ENCODE measurements at regions of chr9 and their contacts with region 1.

Region 1: GRCh38 chr9:111896353-111896958 is at the start of gene UGCG:
- DNase-seq: peak; percentile 85 to 92 (median 87)
- H3K4me3 ChIP-seq: peak within 1 kb of the TSS; percentile 86
- H3K27ac ChIP-seq: peak within 1 kb of the TSS; percentile 82 to 83
- H3K4me1 ChIP-seq: peaks cover 7% of the 10 kb centered on the region
- H3K27me3 ChIP-seq: no peaks in the 10 kb centered on the region
- CTCF ChIP-seq: peak in 1 of 3 donors; percentile 21
- EP300 ChIP-seq: no peak
- POLR2A ChIP-seq: peak; percentile 92
- total RNA-seq, gene UGCG: 18.6 to 74.1 (median 22.5) TPM

Region 2: GRCh38 chr9:110081395-110081794 is 1815.1 kb before region 1 on chr9:
- intact Hi-C with region 1: loop called in 1 of 4 experiments (anchors 5 kb)
- DNase-seq: no peak
- H3K4me3 ChIP-seq: no peak overlapping the region
- H3K27ac ChIP-seq: no peak overlapping the region
- H3K4me1 ChIP-seq: peaks cover 8% of the 10 kb centered on the region
- H3K27me3 ChIP-seq: no peaks in the 10 kb centered on the region
- CTCF ChIP-seq: no peak
- EP300 ChIP-seq: no peak
- POLR2A ChIP-seq: no peak

Region 3: GRCh38 chr9:112074250-112075008 is 178.0 kb after region 1 on chr9:
- intact Hi-C with region 1: loop called in 1 of 4 experiments (anchors 5 kb)
- DNase-seq: peak; percentile 45 to 73 (median 56)
- H3K4me3 ChIP-seq: no peak overlapping the region
- H3K27ac ChIP-seq: peak overlapping the region in 1 of 2 donors; percentile 34
- H3K4me1 ChIP-seq: no peaks in the 10 kb centered on the region
- H3K27me3 ChIP-seq: no peaks in the 10 kb centered on the region
- CTCF ChIP-seq: peak; percentile 52 to 91 (median 84)
- EP300 ChIP-seq: peak; percentile 92
- POLR2A ChIP-seq: no peak

Region 4: DNA sequence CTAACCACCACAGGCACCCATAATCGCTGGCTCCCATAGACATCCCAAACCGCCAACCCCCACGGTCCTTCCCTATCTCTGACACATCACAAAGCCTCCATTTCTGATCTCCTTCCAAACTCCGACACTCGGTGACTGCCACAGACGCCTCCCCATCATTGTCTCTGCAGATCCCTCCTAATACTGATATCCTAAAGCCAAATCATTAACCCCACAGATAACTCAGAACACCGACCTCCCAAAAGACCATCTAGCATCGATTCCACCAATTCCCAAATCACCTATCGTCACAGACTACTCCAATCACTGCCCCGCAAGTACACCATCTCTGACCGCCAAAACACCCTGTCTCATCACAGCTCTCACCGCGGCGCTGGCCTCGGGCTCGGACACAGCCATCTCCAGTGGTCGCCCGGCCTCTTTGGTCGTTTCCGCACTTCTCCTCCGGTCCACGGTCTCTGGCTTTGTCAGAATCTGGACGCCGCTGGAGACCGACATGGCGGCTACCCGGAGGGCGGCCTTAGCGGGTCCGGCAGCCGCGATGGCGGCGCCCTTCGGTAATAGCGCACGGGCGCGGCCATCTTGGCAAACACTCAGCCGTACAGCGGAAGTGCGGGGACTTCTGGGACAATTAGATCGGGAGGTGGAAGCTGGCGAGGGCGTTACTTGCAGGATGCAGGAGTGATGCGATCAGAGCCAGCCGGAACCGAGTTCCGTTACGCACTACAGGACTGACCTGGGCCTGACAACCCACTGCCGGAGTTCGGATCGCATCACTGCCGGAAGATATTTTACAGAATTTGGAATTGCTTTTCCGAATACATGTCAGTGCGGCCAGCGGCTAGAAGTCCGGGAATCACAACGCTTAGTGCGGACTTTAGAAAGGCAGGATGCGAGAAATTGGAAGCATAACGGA is 1160.0 kb after region 1 on chr9 and contains the start of gene ZFP37:
- intact Hi-C with region 1: loop called in 1 of 4 experiments (anchors 10 kb)
- DNase-seq: peak; percentile 94 to 96 (median 95)
- H3K4me3 ChIP-seq: peak within 1 kb of the TSS; percentile 62
- H3K27ac ChIP-seq: peak within 1 kb of the TSS in 1 of 2 donors; percentile 58
- H3K4me1 ChIP-seq: peaks cover 3% of the 10 kb centered on the region
- H3K27me3 ChIP-seq: no peaks in the 10 kb centered on the region
- CTCF ChIP-seq: no peak
- EP300 ChIP-seq: peak; percentile 37
- POLR2A ChIP-seq: peak; percentile 31
- total RNA-seq, gene ZFP37: 3.7 to 11.4 (median 6.7) TPM

Measured in ovary (tissue), 10 donors.